Activated CD4-positive, alpha-beta T cell treated with anti-CD3 and anti-CD28 coated beads, Interleukin-2, amount 10 ng/mL, durations not matched to agents 24 days and 14 days (primary cell): ENCODE measurements at regions of chr12 and their contacts with region 1.

Region 1: GRCh38 chr12:119115296-119115905 is 63.3 kb upstream of the HSPB8 start:
- DNase-seq: peak; percentile 76
- H3K4me3 Mint-ChIP-seq: no peak overlapping the region
- H3K27ac Mint-ChIP-seq: no peak overlapping the region
- H3K4me1 Mint-ChIP-seq: no peaks in the 10 kb centered on the region
- H3K27me3 Mint-ChIP-seq: no peaks in the 10 kb centered on the region

Region 2: DNA sequence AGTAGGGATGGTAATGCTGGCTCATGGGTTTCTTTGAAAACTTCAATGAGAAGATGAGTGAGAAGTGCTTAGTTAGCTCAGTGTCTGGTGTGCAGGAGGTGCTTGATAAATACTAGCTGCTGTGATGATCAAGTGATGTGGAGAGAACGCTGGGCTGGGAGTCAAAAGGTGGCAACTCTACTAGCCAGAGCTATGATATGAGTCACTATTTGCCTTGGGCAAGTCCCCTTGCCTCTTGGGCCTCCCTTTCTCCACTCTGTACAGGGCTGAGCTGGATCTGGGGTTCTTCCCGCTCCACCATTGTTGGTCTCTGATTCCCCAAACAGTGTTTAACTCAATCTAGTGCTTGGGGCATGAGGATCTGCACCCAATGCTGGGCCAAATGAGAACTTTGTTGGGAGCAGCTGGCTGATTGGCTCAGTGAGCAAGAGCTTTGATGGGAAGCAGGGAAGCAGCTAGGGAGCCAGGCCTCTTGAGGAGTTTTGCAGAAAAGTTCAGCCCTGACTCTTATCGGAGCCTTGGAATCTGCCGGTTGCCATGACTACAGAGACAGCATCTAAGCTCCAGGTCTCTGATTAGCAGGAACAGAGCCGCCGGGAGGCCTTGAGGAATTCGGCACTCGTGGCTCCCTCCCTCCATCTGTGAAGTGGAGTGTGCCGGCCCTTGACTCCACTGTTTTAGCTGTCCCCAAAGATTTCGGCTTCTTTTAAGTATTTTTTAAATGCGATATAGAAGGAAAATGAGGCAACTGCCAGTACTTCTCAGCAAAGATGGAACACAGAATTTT is 18.8 kb before region 1 on chr12:
- intact Hi-C with region 1: no loop called
- DNase-seq: no peak
- H3K4me3 Mint-ChIP-seq: no peak overlapping the region
- H3K27ac Mint-ChIP-seq: no peak overlapping the region
- H3K4me1 Mint-ChIP-seq: no peaks in the 10 kb centered on the region
- H3K27me3 Mint-ChIP-seq: no peaks in the 10 kb centered on the region

Region 3: DNA sequence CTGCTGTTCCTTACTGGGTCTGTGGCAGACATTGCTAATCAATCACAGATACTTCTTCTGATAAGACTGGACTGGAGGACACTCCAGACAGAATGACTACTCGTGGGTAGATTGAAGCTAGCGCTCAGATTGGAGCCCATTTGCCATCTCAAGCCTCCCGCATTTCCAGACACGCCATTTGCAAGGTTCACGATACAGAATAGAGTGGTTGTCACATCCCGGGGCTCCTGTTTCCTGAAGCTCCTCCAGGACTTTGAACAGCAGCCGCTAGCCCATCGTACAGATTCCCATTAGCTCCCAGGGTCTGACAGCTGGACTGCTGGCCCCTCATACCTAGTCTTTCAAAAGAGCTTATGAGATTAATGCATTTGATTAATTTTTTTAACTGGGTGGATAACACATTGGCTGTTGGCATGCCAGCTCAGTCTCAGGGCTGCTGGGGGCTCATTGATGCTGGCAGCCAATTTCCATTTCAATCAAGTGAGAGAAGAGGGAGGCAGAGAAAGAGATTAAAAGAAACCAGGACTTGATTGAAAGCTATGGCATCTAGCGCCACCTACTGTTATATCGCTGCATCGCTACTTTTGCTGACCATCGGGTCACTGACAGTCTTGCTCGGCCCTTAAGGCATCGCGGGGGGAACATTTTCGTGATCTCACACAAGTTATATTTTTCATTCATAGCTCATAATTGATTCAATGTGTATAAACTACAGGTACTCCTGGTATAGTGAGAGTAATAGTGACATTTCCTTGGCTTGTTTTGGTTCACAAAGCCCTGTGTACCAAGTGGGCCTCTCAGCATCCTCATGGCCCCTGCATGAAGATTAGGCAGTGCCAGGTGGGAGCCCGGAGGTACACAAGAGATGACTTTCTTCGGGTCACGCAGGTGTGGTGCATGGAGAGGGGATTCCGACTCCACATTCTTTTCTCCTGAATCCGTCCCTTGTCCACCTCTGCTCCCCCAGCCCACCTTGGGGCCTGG is 297.7 kb after region 1 on chr12:
- intact Hi-C with region 1: loop called (anchors 2 kb)
- DNase-seq: peak; percentile 81
- H3K4me3 Mint-ChIP-seq: no peak overlapping the region
- H3K27ac Mint-ChIP-seq: no peak overlapping the region
- H3K4me1 Mint-ChIP-seq: peaks cover 4% of the 10 kb centered on the region
- H3K27me3 Mint-ChIP-seq: peaks cover 4% of the 10 kb centered on the region